A549 (cell line): ENCODE measurements at regions of chr15 and their contacts with region 1.

Region 1: DNA sequence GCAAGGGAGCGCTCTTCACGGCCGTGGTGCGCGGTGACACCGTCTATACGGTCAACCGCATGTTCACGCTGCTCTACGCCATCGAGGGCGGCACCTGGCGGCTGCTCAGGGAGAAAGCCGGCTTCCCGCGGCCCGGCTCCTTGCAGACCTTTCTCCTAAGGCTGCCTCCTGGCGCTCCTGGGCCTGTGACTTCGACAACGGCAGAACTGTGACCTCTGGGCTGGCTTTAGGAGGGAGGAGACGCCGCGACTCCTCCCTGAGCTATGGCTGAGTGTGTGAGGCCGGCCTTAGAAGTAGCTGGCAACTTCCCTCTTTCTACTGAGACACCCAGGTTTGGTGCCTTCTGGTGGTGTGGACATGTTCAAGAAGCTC is 1.4 kb downstream of the KBTBD13 start:
- DNase-seq: peak; percentile 91 to 92
- ATAC-seq: peak; percentile 93 to 98
- H3K4me3 ChIP-seq: no peak overlapping the region
- H3K27ac ChIP-seq: peak overlapping the region; percentile 17 to 65; a peak in 5 of 6 replicates
- H3K4me1 ChIP-seq: peaks cover 7% of the 10 kb centered on the region; the same call in 1 of the 3 replicates
- CTCF ChIP-seq: peak; percentile 93
- EP300 ChIP-seq: no peak
- POLR2A ChIP-seq: no peak
- RAD21 ChIP-seq: peak; percentile 84 to 95

Region 2: GRCh38 chr15:65020419-65020818 is 57.5 kb before region 1 on chr15:
- CTCF ChIA-PET with region 1: interaction called, 16 read pairs
- POLR2A ChIA-PET with region 1: no interaction called
- DNase-seq: peak in 1 of 2 experiments; percentile 47
- ATAC-seq: peak; percentile 88 to 96
- H3K4me3 ChIP-seq: no peak overlapping the region
- H3K27ac ChIP-seq: no peak overlapping the region
- H3K4me1 ChIP-seq: peaks cover 13% of the 10 kb centered on the region; the same call in 2 of the 3 replicates
- CTCF ChIP-seq: no peak
- EP300 ChIP-seq: no peak
- POLR2A ChIP-seq: no peak
- RAD21 ChIP-seq: no peak

Region 3: GRCh38 chr15:65049418-65049840 is 28.5 kb before region 1 on chr15:
- CTCF ChIA-PET with region 1: interaction called, 1,280 read pairs
- POLR2A ChIA-PET with region 1: no interaction called
- DNase-seq: peak; percentile 86 to 90
- ATAC-seq: peak; percentile 68 to 79
- H3K4me3 ChIP-seq: peak overlapping the region; percentile 31
- H3K27ac ChIP-seq: no peak overlapping the region; a peak in 1 of 6 replicates
- H3K4me1 ChIP-seq: peaks cover 33% of the 10 kb centered on the region
- CTCF ChIP-seq: no peak
- EP300 ChIP-seq: no peak
- POLR2A ChIP-seq: no peak
- RAD21 ChIP-seq: no peak

Region 4: GRCh38 chr15:65094294-65094995 is 16.5 kb after region 1 on chr15:
- CTCF ChIA-PET with region 1: interaction called, 26 read pairs
- POLR2A ChIA-PET with region 1: no interaction called
- DNase-seq: no peak
- ATAC-seq: no peak; a peak in 1 of 6 replicates
- H3K4me3 ChIP-seq: no peak overlapping the region
- H3K27ac ChIP-seq: no peak overlapping the region
- H3K4me1 ChIP-seq: no peaks in the 10 kb centered on the region
- CTCF ChIP-seq: no peak
- EP300 ChIP-seq: no peak
- POLR2A ChIP-seq: no peak
- RAD21 ChIP-seq: no peak